ENCODE measurements at regions of chr10 and their contacts with region 1.

Region 1: DNA sequence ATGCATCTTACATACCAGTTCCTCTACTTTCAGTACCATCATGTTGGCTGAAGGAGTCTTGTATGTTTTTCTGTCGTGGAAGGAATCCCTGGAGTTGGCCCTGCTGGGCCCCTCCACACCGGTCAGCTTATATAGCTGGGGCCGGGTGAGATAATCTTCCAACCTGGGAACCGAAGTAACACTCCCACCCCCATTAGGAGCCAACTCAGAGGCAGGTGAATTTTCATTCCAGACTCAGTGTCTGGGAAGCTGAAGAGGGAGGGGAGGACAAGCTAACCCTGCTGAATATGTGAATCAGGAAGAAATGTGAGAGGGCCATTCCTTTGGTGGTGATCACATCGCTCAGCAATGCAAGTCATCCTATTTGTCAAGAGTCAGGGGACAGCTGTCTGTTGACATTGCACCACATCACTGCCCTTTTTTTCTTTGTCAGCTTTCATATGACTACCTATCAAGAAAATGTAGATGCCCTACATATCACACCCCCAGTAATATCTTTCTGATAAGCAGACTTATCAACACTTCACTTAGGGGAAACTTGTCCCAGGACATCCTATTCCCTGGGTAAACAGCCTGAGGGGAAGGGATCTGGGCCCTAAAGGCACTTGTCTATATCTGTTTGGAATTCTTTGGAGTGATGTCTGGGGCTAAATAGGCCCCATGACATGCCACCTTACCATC is at the start of gene ANKRD1:
- DNase-seq: peak; percentile 81
- total RNA-seq, gene ANKRD1: 8,251 TPM

Region 2: GRCh38 chr10:90857635-90858460 is 63.3 kb before region 1 on chr10 and contains the start of gene HTR7:
- intact Hi-C with region 1: no loop called
- DNase-seq: peak; percentile 79
- total RNA-seq, gene HTR7: 0.16 TPM

Region 3: DNA sequence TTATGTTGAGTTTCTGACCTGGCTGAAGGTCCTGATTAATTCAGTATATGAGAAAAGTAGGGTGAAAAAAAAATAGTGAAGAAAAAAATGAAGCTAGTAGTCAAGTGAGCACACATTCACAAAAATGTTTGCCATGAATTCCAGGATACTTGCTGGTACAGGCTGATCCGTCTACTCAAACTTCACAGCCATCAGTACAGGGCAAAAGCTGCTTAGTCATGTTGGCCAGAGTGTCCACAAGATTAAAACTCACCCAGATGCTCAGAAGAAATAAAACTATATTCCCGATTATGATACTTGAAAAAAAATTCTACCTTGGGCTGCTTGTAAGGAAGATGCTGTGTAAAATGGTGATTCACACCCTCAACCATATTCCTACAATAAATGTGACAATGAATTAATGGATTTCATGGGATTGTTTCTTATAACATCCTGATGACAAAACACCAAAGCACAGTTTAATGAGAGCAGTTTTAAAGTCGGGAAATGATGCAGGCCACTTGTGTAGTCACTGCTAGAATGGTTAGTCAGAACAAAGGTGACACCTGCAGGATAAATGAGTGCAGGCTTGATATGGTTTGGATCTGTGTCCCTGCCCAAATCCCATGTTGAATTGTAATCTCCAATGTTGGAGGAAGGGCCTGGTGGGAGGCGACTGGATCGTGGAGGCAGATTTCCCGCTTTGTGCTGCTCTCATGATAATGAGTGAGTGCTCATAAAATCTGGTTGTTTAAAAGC is 49.0 kb after region 1 on chr10:
- intact Hi-C with region 1: no loop called
- DNase-seq: no peak

Region 4: DNA sequence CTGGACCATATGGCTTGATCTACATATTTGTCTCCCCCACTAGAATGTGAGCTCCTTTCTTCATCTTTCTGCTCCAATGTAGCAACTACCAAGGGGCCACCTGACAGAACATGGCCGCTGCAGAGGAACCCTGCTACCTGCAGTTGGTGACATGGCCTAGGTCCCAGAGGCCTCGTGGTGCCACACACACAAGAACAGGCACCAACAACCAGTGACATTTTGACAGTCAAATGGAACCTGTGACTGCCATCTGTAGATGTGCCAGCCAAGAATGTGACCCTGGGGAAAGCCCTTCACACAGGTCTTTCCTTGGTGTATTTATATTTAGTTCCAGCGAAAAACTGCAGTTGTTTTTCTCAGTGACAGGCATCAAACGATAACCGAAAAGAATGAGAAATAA is 67.7 kb after region 1 on chr10:
- intact Hi-C with region 1: loop called (anchors 2 kb)
- DNase-seq: no peak

Region 5: DNA sequence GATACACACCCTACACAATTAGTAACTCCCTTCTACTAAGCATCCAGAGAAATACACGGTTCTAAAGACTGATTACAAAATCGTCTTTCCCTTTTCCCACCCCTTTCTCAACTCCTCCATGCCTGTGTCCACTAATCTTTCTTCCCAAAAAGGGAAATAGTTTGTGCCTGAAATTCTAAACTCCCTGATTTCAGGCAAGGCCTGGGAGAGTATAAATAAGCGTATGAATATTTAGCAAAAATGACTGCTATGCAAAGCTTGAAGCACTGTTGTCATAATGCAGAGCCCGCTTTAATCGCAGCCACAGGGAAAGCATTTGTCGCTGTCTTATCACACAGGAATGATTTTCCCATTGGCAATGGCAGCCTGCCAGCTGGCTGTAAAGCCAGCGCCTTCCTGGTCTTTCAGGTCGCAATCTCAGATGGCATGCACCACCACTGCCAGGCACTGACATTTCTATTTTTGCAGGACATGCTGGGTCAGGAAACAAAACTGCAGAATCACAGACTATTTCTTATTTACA is 156.5 kb after region 1 on chr10:
- intact Hi-C with region 1: loop called (anchors 2 kb)
- DNase-seq: peak; percentile 92